A673 (cell line): ENCODE measurements at regions of chr5 and their contacts with region 1.

Region 1: DNA sequence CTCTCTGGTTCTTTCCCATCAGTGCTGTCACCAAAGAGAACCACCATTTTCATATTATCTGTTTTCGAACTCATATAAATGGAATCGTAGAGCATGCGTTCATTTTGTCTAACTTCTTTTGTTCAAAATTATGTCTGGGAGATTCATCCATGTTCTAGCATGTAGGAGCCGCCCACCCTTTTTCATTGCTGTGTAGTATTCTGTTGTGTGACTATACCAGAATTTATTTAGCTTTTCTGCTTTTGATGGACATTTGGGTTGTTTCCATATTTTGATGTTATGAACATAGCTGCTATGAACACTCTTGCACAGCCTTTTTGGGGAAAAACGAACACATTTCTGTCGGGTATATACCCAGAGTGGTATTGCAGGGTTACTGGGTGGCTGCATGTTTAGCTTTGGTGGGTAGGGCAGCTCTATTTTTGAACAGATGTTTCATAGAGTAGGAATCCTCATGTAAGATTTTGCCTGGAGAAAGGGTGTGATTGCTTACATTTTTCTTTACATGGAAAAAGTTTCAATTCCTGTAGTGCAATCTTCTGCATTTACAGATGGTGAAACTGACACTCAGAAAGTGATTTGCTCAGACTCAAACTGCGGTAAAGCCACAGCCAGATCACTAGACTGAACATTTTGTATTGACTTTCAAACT is 100.2 kb upstream of the IL12B start:
- DNase-seq: no peak
- H3K4me3 ChIP-seq: no peak overlapping the region
- H3K27ac ChIP-seq: no peak overlapping the region
- H3K4me1 ChIP-seq: no peaks in the 10 kb centered on the region
- H3K27me3 ChIP-seq: peaks cover 6% of the 10 kb centered on the region
- CTCF ChIP-seq: no peak

Region 2: GRCh38 chr5:159682623-159683022 is 252.1 kb after region 1 on chr5:
- CTCF ChIA-PET with region 1: no interaction called
- POLR2A ChIA-PET with region 1: interaction called, 12 read pairs
- intact Hi-C with region 1: no loop called
- DNase-seq: no peak
- H3K4me3 ChIP-seq: no peak overlapping the region
- H3K27ac ChIP-seq: no peak overlapping the region
- H3K4me1 ChIP-seq: no peaks in the 10 kb centered on the region
- H3K27me3 ChIP-seq: no peaks in the 10 kb centered on the region
- CTCF ChIP-seq: no peak